ENCODE measurements at regions of chr6 and their contacts with region 1.

Region 1: DNA sequence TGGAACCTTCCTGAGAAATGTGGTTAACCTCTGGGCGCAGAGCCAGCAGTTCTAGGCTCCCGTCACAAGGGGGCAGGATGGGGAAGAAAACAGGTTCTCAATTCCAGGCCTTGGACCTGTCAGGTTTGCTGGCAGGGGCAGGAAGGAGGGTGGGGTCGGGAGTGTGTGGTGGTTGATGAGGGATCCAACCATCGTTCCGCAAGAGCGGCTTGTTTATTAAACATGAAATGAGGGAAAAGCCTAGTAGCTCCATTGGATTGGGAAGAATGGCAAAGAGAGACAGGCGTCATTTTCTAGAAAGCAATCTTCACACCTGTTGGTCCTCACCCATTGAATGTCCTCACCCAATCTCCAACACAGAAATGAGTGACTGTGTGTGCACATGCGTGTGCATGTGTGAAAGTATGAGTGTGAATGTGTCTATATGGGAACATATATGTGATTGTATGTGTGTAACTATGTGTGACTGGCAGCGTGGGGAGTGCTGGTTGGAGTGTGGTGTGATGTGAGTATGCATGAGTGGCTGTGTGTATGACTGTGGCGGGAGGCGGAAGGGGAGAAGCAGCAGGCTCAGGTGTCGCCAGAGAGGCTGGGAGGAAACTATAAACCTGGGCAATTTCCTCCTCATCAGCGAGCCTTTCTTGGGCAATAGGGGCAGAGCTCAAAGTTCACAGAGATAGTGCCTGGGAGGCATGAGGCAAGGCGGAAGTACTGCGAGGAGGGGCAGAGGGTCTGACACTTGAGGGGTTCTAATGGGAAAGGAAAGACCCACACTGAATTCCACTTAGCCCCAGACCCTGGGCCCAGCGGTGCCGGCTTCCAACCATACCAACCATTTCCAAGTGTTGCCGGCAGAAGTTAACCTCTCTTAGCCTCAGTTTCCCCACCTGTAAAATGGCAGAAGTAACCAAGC is 29.6 kb downstream of the SRSF3 start:
- DNase-seq: peak; percentile 86 to 94 (median 93)
- ATAC-seq: peak; percentile 56 to 58
- H3K4me3 ChIP-seq: no peak overlapping the region
- H3K27ac ChIP-seq: no peak overlapping the region
- H3K4me1 ChIP-seq: peaks cover 6% of the 10 kb centered on the region
- H3K27me3 ChIP-seq: no peaks in the 10 kb centered on the region

Region 2: GRCh38 chr6:36682328-36683144 is 58.7 kb after region 1 on chr6:
- intact Hi-C with region 1: loop called (anchors 2 to 5 kb)
- DNase-seq: peak in 2 of 3 donors; percentile 61 to 64
- ATAC-seq: no peak
- H3K4me3 ChIP-seq: no peak overlapping the region
- H3K27ac ChIP-seq: no peak overlapping the region
- H3K4me1 ChIP-seq: peaks cover 6% of the 10 kb centered on the region
- H3K27me3 ChIP-seq: no peaks in the 10 kb centered on the region

Region 3: DNA sequence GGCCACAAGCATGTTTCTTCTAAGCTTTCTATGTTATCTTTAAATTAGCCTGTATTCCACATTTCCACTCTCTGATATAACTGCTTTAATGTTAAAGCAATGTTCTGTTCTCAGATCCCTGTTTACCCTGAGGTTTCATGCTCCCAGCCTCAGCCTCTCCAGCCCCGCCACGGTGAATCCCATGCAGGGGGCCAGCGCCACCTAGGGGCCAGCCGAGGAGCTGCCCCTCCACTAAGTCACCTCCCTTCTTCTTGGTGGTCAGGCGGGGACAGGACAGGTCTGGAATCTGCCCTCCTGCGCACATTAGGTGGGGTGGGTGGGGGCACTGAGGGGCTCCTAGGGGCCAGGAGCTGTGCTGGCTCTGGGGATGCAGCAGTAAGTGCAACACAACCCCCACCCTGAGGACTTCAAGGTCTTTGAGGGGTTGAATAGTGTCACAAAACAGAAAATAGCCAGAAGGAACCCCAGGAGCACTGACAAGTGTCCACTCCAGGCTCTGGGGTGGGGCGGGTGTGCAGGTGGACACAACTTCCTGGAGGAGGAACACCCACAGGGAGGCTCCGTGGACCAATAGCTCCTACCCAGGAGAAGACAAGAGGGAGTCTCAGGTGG is 135.5 kb after region 1 on chr6:
- intact Hi-C with region 1: loop called in 3 of 4 experiments (anchors 5 to 10 kb)
- DNase-seq: peak; percentile 78 to 93 (median 93)
- ATAC-seq: peak; percentile 82 to 87
- H3K4me3 ChIP-seq: no peak overlapping the region
- H3K27ac ChIP-seq: no peak overlapping the region
- H3K4me1 ChIP-seq: no peaks in the 10 kb centered on the region
- H3K27me3 ChIP-seq: no peaks in the 10 kb centered on the region